Dorsolateral prefrontal cortex (tissue), 120 donors: ENCODE measurements at regions of chr7 and their contacts with region 1.

Region 1: DNA sequence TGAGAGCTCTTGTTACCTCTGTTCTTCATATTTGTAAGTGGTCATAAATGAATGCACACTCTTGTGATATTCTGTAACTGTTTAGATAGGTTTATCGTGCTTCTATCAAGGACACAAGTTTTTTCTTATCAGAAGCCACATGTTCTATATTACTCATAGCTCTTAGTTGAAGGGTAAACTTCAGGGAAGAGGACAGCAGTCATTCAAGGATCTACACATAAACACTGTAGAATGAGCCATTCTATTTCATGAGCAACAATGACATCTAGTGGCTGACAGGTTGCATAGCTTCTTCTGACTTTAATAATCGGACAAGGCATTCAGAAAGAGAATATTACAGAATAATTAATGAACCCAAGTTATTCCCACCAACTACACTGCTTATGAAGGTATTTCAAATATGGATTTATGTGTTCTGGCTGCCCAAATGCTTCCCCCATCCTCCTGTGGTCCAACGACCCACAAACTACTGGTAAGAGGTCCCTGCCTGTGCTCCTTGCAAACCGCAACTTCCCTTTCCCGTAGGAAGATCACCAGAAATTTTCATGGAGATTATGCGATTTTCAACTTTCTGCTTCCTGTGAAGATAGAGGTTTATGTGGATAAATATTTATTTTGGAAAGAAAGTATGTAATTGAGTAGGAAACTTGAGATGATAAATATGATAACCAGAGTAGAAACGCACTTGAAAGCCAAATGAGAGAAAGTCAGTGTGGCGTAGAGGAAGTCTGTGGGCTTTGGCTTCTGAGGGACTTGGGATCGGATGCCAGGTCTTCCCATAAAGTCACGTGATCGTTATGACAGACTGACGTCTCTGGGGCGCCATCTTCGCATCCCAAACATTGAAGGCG is 16.8 kb upstream of the ABCB5 start:
- DNase-seq: no peak
- H3K4me3 ChIP-seq: peak overlapping the region in 40 of 59 donors; percentile 1 to 60 (median 28)
- H3K27ac ChIP-seq: no peak overlapping the region
- H3K27me3 ChIP-seq: peaks cover 0 to 6% (median 0%) of the 10 kb centered on the region in 45 donors
- CTCF ChIP-seq: peak; percentile 62 to 98 (median 85)

Region 2: DNA sequence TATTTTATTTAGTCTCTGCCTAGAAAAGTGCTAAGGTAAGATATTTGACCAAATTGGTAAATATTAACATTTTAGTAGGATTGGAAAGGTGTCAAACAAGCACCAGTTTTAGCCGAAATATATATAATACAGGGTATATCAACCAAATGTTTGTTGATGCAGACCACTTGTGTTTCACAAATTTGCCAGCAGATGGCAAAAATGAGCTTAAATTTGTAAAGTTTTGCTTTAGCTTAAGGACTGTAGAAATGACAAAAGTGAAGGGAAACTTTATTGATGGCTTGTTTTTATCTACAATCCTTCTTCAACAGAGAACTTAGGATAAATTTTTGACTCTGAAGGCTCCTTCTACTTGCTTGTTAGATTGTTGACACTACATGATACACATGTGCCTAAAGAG is 885.0 kb before region 1 on chr7:
- intact Hi-C with region 1: loop called (anchors 2 to 5 kb)
- DNase-seq: peak in 3 of 10 donors; percentile 6 to 41 (median 34)
- H3K4me3 ChIP-seq: no peak overlapping the region
- H3K27ac ChIP-seq: no peak overlapping the region
- H3K27me3 ChIP-seq: no peaks in the 10 kb centered on the region
- CTCF ChIP-seq: peak; percentile 48 to 83 (median 71)

Region 3: DNA sequence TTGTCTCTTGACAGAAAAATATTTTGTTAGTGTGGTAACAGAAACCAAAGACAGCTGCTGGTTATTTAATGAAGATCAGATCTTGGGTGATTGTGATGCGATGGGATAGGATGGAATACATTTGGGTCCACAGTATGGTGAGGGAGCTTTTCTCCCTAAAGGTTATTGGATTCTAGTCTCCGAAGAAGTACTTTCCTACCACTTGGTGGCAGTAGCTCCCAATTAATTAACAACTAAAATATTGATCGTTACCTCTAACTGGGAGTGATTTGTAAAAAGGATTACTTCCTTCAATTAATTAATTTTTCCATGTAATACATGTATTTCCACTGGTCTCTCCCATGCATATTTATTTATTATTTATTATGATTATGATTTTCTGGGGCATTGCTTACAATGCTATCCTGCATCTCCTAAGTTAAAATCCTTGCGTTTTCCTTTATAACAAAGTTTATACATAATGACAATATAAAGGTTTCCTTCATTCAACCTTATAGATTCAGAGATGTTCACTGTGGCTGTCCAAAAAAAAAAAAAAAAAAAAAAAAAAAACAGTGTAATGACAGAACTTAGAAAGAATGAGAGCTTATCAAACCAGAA is 850.8 kb before region 1 on chr7:
- intact Hi-C with region 1: loop called in 1 of 2 experiments (anchors 5 kb)
- DNase-seq: no peak
- H3K4me3 ChIP-seq: no peak overlapping the region
- H3K27ac ChIP-seq: no peak overlapping the region
- H3K27me3 ChIP-seq: no peaks in the 10 kb centered on the region
- CTCF ChIP-seq: peak; percentile 44 to 84 (median 64)

Region 4: DNA sequence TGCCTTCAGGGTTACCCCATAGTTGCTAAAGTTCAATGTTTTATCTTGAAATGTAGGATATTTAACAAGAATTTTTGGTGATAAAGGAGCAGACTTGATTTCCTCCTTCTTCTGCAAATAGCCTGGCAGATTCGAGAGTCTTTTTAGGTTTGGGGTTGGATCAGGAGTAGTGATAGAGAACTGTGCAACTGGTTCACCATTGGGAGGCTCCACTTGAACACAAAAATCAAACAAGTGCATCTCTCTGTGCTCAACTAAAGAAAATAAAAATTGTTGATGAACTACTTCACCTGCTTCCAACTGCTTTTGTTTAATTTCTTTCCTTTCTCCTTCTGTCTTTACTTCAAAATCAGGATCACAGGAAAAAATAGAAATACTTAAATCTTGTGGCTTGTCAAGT is 440.0 kb before region 1 on chr7:
- intact Hi-C with region 1: loop called (anchors 5 kb)
- DNase-seq: no peak
- H3K4me3 ChIP-seq: no peak overlapping the region
- H3K27ac ChIP-seq: no peak overlapping the region
- H3K27me3 ChIP-seq: no peaks in the 10 kb centered on the region
- CTCF ChIP-seq: peak in 54 of 56 donors; percentile 24 to 81 (median 60)

Region 5: GRCh38 chr7:20330240-20330927 is 268.3 kb before region 1 on chr7 and contains the start of gene ITGB8:
- intact Hi-C with region 1: loop called (anchors 5 to 10 kb)
- DNase-seq: peak; percentile 39 to 95 (median 92)
- H3K4me3 ChIP-seq: peak within 1 kb of the TSS; percentile 53 to 90 (median 75)
- H3K27ac ChIP-seq: peak within 1 kb of the TSS; percentile 43 to 99 (median 96)
- H3K27me3 ChIP-seq: no peaks in the 10 kb centered on the region
- CTCF ChIP-seq: peak in 8 of 56 donors; percentile 1 to 18 (median 4)
- total RNA-seq, gene ITGB8: 39.2 to 161 (median 86.9) TPM

Region 6: GRCh38 chr7:20407585-20408461 is 190.9 kb before region 1 on chr7:
- intact Hi-C with region 1: loop called in 1 of 2 experiments (anchors 10 kb)
- DNase-seq: no peak
- H3K4me3 ChIP-seq: no peak overlapping the region
- H3K27ac ChIP-seq: peak overlapping the region in 7 of 59 donors; percentile 6 to 43 (median 30)
- H3K27me3 ChIP-seq: no peaks in the 10 kb centered on the region
- CTCF ChIP-seq: no peak

Region 7: GRCh38 chr7:20786779-20787659 is 188.3 kb after region 1 on chr7 and contains the start of gene SP8:
- intact Hi-C with region 1: no loop called
- DNase-seq: peak in 1 of 10 donors; percentile 53
- H3K4me3 ChIP-seq: peak within 1 kb of the TSS in 57 of 59 donors; percentile 14 to 64 (median 42)
- H3K27ac ChIP-seq: no peak within 1 kb of the TSS
- H3K27me3 ChIP-seq: peaks cover 21 to 100% (median 99%) of the 10 kb centered on the region in 45 donors
- CTCF ChIP-seq: no peak
- total RNA-seq, gene SP8: 0.21 to 3.7 (median 1.2) TPM